Activated CD8-positive, alpha-beta T cell treated with anti-CD3 and anti-CD28 coated beads, Interleukin-2, amount 10 ng/mL, durations not matched to agents 7 days and 5 days (primary cell): ENCODE measurements at regions of chr14 and their contacts with region 1.

Region 1: DNA sequence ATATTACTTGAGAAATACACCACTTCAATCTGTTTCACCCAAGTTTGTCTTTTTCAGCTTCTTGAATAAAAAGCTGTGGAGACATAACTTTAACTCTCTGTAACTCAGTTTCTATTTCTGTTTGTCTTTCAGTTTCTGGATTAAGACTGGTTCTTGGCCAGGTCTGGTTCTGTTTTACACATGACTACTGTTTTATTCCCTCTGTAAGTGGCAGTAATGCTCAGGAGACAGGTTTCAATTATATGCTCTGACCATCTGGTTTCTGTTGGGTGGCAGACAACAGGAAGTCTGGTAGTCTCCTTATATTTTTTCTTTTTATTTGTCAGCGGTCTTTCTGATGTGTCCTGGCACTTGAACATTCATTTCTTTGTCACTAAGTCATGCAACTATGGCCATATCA is 102.9 kb downstream of the RPS29 start:
- DNase-seq: no peak
- ATAC-seq: no peak
- H3K4me3 Mint-ChIP-seq: no peak overlapping the region
- H3K27ac Mint-ChIP-seq: no peak overlapping the region
- H3K4me1 Mint-ChIP-seq: peaks cover 8% of the 10 kb centered on the region
- H3K27me3 Mint-ChIP-seq: peaks cover 10% of the 10 kb centered on the region

Region 2: DNA sequence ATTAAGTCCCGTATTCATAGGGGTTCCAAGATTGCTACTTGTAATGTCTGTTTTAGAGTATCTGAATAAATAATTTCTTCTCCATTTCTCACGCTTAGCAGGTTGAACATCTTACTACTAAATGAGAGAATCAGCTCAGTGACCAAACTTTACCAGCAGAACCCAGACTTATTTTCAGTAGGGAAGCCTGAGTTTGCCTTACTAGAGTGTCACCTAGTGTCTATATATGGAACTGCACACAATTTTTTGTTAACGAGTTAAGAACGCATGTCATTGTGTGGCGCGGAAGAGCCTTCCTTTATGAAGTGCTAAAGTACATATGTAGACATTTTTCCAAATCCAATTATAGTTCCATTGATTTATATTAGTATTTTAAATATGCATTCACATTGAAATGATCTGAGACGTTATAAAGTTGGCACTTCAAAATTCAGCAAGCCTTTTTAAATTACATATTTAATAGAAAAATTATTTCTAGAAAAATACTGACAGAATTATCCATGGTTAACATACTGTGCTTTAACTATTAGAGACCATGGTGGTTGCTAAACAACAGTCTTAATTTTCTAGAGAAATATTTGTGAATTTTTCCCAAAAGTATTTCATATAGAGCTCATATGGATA is 14.6 kb after region 1 on chr14:
- CTCF ChIA-PET with region 1: interaction called, 15 read pairs
- POLR2A ChIA-PET with region 1: no interaction called
- DNase-seq: peak; percentile 24
- ATAC-seq: peak; percentile 65
- H3K4me3 Mint-ChIP-seq: no peak overlapping the region
- H3K27ac Mint-ChIP-seq: no peak overlapping the region
- H3K4me1 Mint-ChIP-seq: no peaks in the 10 kb centered on the region
- H3K27me3 Mint-ChIP-seq: peaks cover 21% of the 10 kb centered on the region

Region 3: DNA sequence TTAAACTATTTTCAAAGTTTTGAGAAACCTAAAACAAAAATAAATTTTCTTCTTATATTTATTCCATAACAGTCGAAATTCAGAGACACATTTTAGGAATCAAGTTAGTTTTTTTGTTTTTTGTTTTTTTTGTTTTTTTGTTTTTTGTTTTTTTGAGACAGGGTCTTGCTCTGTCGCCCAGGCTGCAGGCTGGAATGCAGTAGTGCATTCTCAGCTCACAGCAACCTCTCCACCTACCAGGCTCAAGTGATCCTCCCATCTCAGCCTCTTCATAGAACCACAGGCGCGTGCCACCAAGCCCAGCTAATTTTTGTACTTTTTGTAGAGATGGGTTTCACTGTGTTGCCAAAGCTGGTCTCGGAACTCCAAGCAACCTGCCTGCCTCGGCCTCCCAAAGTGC is 170.2 kb after region 1 on chr14:
- CTCF ChIA-PET with region 1: no interaction called
- POLR2A ChIA-PET with region 1: no interaction called
- DNase-seq: no peak
- ATAC-seq: no peak
- H3K4me3 Mint-ChIP-seq: no peak overlapping the region
- H3K27ac Mint-ChIP-seq: no peak overlapping the region
- H3K4me1 Mint-ChIP-seq: no peaks in the 10 kb centered on the region
- H3K27me3 Mint-ChIP-seq: no peaks in the 10 kb centered on the region